ENCODE measurements at regions of chr9 and their contacts with region 1.

Region 1: DNA sequence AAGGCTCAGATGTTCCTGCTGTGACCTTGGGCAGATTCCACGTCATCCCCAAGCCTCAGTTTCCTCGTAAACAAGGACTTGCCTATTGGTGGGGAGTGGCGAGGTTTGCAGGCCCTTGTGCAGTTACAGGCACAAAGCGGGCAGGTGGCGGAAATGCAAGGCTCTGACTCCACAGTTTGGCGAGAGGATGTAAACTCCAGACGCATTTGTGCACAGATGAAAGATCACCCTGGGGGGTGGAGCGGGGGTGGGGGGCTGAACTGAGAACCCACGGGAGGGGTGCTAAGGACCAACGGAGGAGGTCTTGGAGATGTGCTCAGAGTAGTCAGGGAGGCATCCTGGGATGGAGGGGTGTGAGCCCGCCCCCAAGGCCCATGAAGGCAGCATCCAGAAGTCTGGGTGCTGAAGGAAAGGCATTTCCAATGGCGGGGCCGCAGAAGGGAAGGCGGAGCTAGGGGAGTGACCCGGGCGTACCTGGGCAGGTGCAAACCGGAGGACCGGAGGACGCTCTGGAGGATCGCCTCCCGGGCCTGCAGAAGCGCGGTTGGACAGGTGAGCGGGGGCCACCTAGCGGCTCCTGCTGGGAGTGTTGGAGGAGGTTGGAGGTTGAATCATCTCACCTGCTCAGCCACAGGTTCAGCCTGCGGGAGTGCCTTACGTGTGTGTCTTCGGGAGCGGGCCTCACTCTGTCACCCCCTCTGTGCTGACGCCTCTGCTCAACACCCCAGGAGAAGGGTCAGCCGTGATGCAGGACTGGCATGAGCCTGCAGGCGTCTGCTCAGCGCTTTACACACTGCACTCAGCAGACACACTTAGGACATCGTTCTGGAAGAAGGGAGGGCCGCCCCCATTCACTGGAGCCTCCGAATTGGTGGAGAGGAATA is 1.9 kb upstream of the FIBCD1 start:
- DNase-seq: peak in 9 of 10 donors; percentile 47 to 80 (median 67)
- H3K4me3 ChIP-seq: peak overlapping the region in 3 of 59 donors; percentile 10 to 32 (median 17)
- H3K27ac ChIP-seq: no peak overlapping the region
- H3K27me3 ChIP-seq: peaks cover 0 to 60% (median 34%) of the 10 kb centered on the region in 45 donors
- CTCF ChIP-seq: peak; percentile 53 to 94 (median 84)

Region 2: GRCh38 chr9:130707225-130707976 is 233.5 kb before region 1 on chr9:
- intact Hi-C with region 1: loop called (anchors 5 kb)
- DNase-seq: peak in 5 of 10 donors; percentile 28 to 66 (median 47)
- H3K4me3 ChIP-seq: no peak overlapping the region
- H3K27ac ChIP-seq: peak overlapping the region in 1 of 59 donors; percentile 20
- H3K27me3 ChIP-seq: no peaks in the 10 kb centered on the region
- CTCF ChIP-seq: peak; percentile 70 to 94 (median 83)

Region 3: GRCh38 chr9:130866474-130866965 is 74.4 kb before region 1 on chr9:
- intact Hi-C with region 1: loop called (anchors 2 to 5 kb)
- DNase-seq: peak in 9 of 10 donors; percentile 50 to 82 (median 65)
- H3K4me3 ChIP-seq: no peak overlapping the region
- H3K27ac ChIP-seq: peak overlapping the region in 15 of 59 donors; percentile 11 to 66 (median 28)
- H3K27me3 ChIP-seq: no peaks in the 10 kb centered on the region
- CTCF ChIP-seq: peak; percentile 60 to 89 (median 78)

Region 4: DNA sequence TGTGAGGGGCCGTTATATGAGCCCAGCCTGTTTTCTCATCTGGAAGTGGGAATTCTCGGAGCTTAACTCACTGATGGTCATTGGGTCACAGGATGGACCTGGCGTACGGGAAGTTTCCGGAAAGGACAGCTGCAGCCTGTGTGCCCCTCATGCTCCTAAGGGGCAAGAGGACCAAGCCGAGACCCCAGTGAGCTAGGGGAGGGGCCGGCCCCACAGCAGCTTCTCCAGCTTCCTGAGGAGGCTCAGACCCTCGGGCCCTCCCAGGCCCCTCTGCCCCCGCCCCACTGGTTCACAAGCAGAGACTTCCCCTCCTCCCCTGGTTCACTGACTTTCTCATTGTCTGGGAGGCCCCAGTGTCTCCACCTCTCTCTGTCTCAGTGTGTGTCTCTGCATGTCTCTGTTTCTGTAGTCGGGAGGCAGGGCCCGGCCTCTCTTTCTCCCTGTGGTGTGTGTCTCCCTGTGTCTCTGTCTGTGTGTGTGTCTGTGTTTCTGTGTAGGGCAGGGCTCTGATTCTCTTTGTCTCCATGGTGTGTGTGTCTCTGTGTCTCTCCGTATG is 30.4 kb after region 1 on chr9:
- intact Hi-C with region 1: no loop called
- DNase-seq: no peak
- H3K4me3 ChIP-seq: no peak overlapping the region
- H3K27ac ChIP-seq: no peak overlapping the region
- H3K27me3 ChIP-seq: peaks cover 0 to 13% (median 0%) of the 10 kb centered on the region in 45 donors
- CTCF ChIP-seq: no peak

Region 5: GRCh38 chr9:130986356-130986965 is 45.5 kb after region 1 on chr9:
- intact Hi-C with region 1: no loop called
- DNase-seq: no peak
- H3K4me3 ChIP-seq: no peak overlapping the region
- H3K27ac ChIP-seq: no peak overlapping the region
- H3K27me3 ChIP-seq: no peaks in the 10 kb centered on the region
- CTCF ChIP-seq: no peak

Region 6: DNA sequence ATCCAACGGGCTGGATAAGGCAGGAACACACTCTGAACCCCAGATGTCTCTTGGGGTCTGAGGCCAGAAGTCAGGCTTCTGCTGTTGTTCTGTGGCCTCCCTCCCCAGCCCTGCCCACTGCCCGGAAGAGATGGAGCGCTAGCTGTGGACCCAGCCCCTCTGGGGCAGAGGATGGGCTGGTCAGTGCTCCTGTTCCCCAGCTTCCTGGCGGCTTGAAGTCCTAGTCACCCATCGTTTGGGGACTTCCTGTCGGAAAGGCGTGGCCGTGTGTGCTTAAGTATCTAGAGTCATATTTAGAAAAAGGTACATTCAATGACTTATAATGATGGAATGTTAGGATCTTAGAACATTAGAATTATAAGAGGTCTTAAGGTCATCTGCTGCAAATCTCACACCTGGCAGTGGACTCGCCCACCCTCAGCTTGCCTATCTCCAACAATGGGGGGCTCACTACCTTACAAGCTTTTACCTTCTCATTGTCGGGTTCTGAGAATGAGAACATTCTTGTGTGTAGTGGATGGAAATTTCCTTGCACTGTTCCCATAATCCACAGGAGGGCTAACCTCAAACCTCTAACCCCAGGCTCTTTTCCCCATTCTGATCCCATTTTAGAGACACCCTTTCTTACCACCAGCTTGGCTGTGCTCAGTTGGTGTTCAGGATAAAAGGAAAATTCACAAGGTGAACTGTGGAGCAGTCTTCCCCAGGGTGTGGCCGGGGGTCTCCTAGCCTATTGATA is 142.0 kb after region 1 on chr9:
- intact Hi-C with region 1: no loop called
- DNase-seq: no peak
- H3K4me3 ChIP-seq: no peak overlapping the region
- H3K27ac ChIP-seq: no peak overlapping the region
- H3K27me3 ChIP-seq: no peaks in the 10 kb centered on the region
- CTCF ChIP-seq: no peak

Measured in dorsolateral prefrontal cortex (tissue), 120 donors.